Sigmoid colon (tissue), 7 donors: ENCODE measurements at regions of chr12 and their contacts with region 1.

Region 1: GRCh38 chr12:50074936-50075807 is 10.0 kb upstream of the SMARCD1 start:
- DNase-seq: peak; percentile 91
- H3K4me3 ChIP-seq: no peak overlapping the region
- H3K27ac ChIP-seq: no peak overlapping the region
- H3K4me1 ChIP-seq: peaks cover 0 to 13% (median 10%) of the 10 kb centered on the region in 4 donors
- H3K27me3 ChIP-seq: no peaks in the 10 kb centered on the region
- CTCF ChIP-seq: peak; percentile 88 to 93 (median 90)
- EP300 ChIP-seq: no peak
- POLR2A ChIP-seq: no peak

Region 2: GRCh38 chr12:50174971-50175715 is 100.0 kb after region 1 on chr12:
- intact Hi-C with region 1: loop called (anchors 1 kb)
- DNase-seq: no peak
- H3K4me3 ChIP-seq: no peak overlapping the region
- H3K27ac ChIP-seq: peak overlapping the region in 2 of 4 donors; percentile 1 to 32
- H3K4me1 ChIP-seq: no peaks in the 10 kb centered on the region
- H3K27me3 ChIP-seq: no peaks in the 10 kb centered on the region
- CTCF ChIP-seq: peak; percentile 45 to 70 (median 62)
- EP300 ChIP-seq: no peak
- POLR2A ChIP-seq: no peak

Region 3: GRCh38 chr12:50314629-50315312 is 239.6 kb after region 1 on chr12:
- intact Hi-C with region 1: loop called (anchors 10 kb)
- DNase-seq: no peak
- H3K4me3 ChIP-seq: no peak overlapping the region
- H3K27ac ChIP-seq: no peak overlapping the region
- H3K4me1 ChIP-seq: no peaks in the 10 kb centered on the region
- H3K27me3 ChIP-seq: no peaks in the 10 kb centered on the region
- CTCF ChIP-seq: peak; percentile 20 to 41 (median 39)
- EP300 ChIP-seq: no peak
- POLR2A ChIP-seq: no peak